Activated CD8-positive, alpha-beta T cell treated with anti-CD3 and anti-CD28 coated beads, Interleukin-2, amount 10 ng/mL, durations not matched to agents 7 days and 5 days (primary cell): ENCODE measurements at regions of chr15 and their contacts with region 1.

Region 1: DNA sequence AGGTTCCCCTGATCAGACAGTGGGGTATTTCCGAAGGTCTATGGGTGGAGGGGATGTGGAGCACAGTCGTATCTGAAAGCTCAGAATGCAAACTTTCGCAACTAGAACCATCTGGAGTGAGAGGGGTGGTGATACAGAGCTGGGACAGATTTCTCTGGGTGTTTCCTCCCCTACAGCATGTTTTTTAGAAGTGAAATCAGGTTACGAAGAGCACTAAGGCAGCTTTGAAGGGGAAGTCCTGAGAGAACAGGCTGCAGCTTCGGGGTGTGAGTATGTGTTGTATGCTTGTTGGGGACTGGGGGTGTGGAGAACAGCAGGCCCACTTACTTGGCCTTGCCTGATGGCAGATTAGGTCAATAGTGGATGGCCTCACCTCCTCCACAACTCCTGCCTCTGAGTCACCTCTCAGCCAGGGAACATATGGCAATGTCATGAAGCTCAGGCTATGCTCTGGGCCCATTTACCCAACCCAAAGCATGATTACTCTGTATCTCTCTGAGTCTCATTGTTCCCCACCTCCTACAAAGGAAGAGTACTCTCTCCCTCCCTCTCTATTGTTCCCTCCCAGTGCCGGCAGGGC is 107.2 kb upstream of the RASGRP1 start:
- DNase-seq: peak; percentile 44
- ATAC-seq: peak; percentile 34
- H3K4me3 Mint-ChIP-seq: peak overlapping the region; percentile 44
- H3K27ac Mint-ChIP-seq: peak overlapping the region; percentile 91
- H3K4me1 Mint-ChIP-seq: peaks cover 84% of the 10 kb centered on the region
- H3K27me3 Mint-ChIP-seq: no peaks in the 10 kb centered on the region

Region 2: DNA sequence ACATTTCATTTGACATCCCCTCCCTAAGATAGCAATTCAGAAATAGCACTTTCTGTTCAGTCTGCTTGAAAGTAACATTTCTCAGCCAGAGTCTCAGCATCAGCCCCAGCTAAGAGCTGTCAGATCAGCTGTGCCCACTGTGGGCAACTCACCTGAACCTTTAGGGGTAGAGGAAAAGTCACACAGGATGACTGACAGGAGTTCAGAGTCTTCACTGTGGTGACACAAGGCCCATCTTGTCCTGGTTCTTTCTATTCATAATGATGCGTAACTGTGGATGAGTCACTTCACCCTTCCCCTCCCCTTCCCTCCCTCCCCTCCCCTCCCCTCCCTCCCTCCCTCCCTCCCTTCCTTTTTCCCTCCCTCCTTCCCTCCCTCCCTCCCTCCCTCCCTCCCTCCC is 11.0 kb before region 1 on chr15:
- CTCF ChIA-PET with region 1: interaction called, 21 read pairs
- POLR2A ChIA-PET with region 1: interaction called, 164 read pairs
- DNase-seq: peak; percentile 39
- ATAC-seq: peak; percentile 54
- H3K4me3 Mint-ChIP-seq: no peak overlapping the region
- H3K27ac Mint-ChIP-seq: peak overlapping the region; percentile 60
- H3K4me1 Mint-ChIP-seq: peaks cover 75% of the 10 kb centered on the region
- H3K27me3 Mint-ChIP-seq: no peaks in the 10 kb centered on the region